IMR-90 (cell line): ENCODE measurements at regions of chr1 and their contacts with region 1.

Region 1: DNA sequence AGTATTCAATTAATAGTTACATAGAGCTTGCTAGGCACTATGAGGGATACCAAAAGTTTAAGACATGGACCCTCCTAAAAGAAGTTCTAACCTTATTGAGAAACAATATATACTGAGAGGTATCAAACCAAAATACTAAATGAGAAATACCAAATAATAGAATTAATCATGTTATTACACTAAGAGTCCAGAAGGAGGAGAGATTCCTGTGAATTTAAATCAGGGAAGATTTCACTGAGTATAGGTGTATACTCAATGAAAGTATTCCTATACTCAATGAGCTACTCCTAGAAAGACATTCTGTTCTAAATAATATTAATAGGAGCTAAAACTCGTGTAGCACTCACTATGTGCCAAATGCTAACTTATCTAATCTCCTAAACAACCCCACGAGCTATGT is 9.4 kb downstream of the CR1L start:
- DNase-seq: peak; percentile 4
- ATAC-seq: peak; percentile 78
- H3K4me3 ChIP-seq: no peak overlapping the region
- H3K27ac ChIP-seq: no peak overlapping the region
- H3K4me1 ChIP-seq: no peaks in the 10 kb centered on the region
- H3K27me3 ChIP-seq: peaks cover 8% of the 10 kb centered on the region
- CTCF ChIP-seq: peak; percentile 38; the same call in 1 of the 2 replicates
- POLR2A ChIP-seq: no peak
- RAD21 ChIP-seq: peak; percentile 14; the same call in 1 of the 2 replicates

Region 2: DNA sequence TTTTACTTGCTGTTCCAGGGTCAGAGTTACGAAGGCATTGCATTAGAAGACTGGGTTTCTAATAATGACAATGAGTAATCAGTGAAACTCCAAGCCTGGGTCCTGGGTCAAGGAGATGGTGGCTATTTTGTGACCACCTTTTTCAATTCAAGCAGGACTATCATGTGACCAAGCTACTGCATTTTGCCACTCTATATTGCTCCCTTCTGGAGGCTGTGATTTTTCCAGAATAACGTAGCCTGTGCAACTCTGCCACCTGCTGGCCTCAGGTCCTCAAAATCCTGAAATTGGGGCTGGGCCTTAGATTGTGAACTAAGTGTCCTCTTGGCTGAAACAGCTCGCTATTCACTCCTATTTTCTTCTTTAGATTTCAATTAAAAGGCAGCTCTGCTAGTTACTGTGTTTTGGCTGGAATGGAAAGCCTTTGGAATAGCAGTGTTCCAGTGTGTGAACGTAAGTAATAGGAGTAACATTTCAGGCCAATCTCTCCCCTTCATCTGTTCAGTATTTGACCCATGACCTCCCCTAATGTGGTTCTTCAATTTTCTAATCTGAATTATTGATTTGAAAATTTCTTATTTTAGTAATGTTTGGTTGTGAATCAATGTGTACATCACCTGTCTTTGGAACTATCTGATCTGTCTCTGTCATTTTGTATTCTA is 44.6 kb after region 1 on chr1:
- CTCF ChIA-PET with region 1: interaction called, 4 read pairs
- POLR2A ChIA-PET with region 1: no interaction called
- dilution Hi-C with region 1: no loop called
- in situ Hi-C with region 1: no loop called
- intact Hi-C with region 1: loop called (anchors 1 kb)
- DNase-seq: peak; percentile 56
- ATAC-seq: peak; percentile 98
- H3K4me3 ChIP-seq: no peak overlapping the region
- H3K27ac ChIP-seq: no peak overlapping the region
- H3K4me1 ChIP-seq: no peaks in the 10 kb centered on the region
- H3K27me3 ChIP-seq: no peaks in the 10 kb centered on the region; the same call in 1 of the 2 replicates
- CTCF ChIP-seq: peak; percentile 66
- POLR2A ChIP-seq: no peak
- RAD21 ChIP-seq: peak; percentile 59

Region 3: GRCh38 chr1:208054485-208054884 is 400.2 kb after region 1 on chr1:
- CTCF ChIA-PET with region 1: no interaction called
- POLR2A ChIA-PET with region 1: no interaction called
- dilution Hi-C with region 1: no loop called
- in situ Hi-C with region 1: no loop called
- intact Hi-C with region 1: no loop called
- DNase-seq: no peak
- ATAC-seq: no peak
- H3K4me3 ChIP-seq: no peak overlapping the region
- H3K27ac ChIP-seq: no peak overlapping the region
- H3K4me1 ChIP-seq: no peaks in the 10 kb centered on the region
- H3K27me3 ChIP-seq: no peaks in the 10 kb centered on the region; the same call in 1 of the 2 replicates
- CTCF ChIP-seq: no peak
- POLR2A ChIP-seq: no peak
- RAD21 ChIP-seq: no peak